ENCODE measurements at regions of chr1 and their contacts with region 1.

Region 1: GRCh38 chr1:108691942-108692723 is at the start of gene PRPF38B:
- DNase-seq: peak; percentile 92 to 98 (median 95)
- H3K4me3 ChIP-seq: peak within 1 kb of the TSS; percentile 61 to 93 (median 70)
- H3K27ac ChIP-seq: peak within 1 kb of the TSS; percentile 88 to 97 (median 95)
- H3K4me1 ChIP-seq: peaks cover 20 to 36% of the 10 kb centered on the region in 2 donors
- H3K27me3 ChIP-seq: no peaks in the 10 kb centered on the region
- CTCF ChIP-seq: no peak
- POLR2A ChIP-seq: peak; percentile 74 to 88
- total RNA-seq, gene PRPF38B: 11.3 to 33.2 (median 23.0) TPM

Region 2: GRCh38 chr1:108742253-108742652 is 50.1 kb after region 1 on chr1:
- intact Hi-C with region 1: loop called in 1 of 2 experiments (anchors 5 kb)
- DNase-seq: no peak
- H3K4me3 ChIP-seq: no peak overlapping the region
- H3K27ac ChIP-seq: no peak overlapping the region
- H3K4me1 ChIP-seq: no peaks in the 10 kb centered on the region
- H3K27me3 ChIP-seq: no peaks in the 10 kb centered on the region
- CTCF ChIP-seq: no peak
- POLR2A ChIP-seq: no peak

Region 3: DNA sequence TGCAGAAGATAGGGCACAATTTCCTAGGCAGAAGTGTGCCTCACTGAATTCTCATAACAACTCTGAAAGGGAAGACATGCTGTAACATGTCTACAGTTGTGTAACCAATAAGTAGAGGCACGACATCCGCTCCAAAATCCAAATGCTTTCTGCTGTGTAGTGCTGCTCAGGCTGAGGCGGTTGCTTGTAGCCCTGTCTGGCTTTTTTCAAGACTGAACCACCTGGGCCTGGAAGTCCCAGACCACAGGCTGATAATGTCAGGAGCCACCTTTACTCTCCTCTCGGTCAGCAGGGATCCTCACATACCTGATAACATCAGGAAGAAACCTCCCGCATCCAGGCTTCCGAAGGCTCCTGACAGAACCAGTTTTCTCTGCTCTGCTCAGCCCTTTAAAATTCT is 153.9 kb after region 1 on chr1:
- intact Hi-C with region 1: no loop called
- DNase-seq: no peak
- H3K4me3 ChIP-seq: no peak overlapping the region
- H3K27ac ChIP-seq: no peak overlapping the region
- H3K4me1 ChIP-seq: no peaks in the 10 kb centered on the region
- H3K27me3 ChIP-seq: no peaks in the 10 kb centered on the region
- CTCF ChIP-seq: no peak
- POLR2A ChIP-seq: no peak